Psoas muscle (tissue), 8 donors: ENCODE measurements at regions of chr2 and their contacts with region 1.

Region 1: GRCh38 chr2:159286709-159287441 is 372 bp upstream of the WDSUB1 start:
- DNase-seq: peak; percentile 99
- ATAC-seq: peak; percentile 97 to 99 (median 99)
- H3K4me3 ChIP-seq: peak overlapping the region; percentile 94
- H3K27ac ChIP-seq: peak overlapping the region; percentile 92
- H3K4me1 ChIP-seq: peaks cover 14% of the 10 kb centered on the region
- H3K27me3 ChIP-seq: no peaks in the 10 kb centered on the region
- CTCF ChIP-seq: no peak

Region 2: DNA sequence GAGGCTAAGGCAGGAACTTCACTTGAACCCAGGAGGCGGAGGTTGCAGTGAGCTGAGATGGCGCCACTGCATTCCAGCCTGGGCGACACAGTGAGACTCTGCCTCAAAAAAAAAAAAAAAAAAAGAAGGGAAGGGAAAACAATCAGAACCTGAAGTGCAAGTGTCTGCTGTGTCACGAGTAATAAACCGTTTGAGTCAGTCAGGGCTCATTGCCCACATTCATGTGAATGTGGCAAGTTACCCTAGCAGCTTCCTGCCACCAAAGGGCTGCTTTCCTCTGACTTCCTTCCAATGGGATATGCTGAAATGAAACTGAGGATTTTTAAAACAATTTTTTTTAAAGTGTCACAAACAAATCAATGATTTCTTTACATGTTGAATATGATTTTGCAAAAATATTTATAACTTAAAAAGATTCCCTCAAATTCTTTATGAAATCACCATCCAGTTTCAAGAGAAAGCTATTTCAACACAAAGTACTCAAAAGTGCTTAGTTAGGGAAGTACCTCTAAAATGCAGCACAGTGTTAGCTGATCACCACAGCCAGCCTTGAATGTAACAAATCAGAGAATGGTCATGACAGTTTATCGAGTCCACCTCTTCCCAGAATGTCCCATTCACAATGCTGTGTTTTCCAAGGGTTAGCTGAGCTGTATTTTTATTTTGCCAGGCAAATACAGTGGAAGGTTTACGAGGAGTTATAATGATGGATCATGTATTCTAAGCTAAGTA is 36.7 kb before region 1 on chr2:
- intact Hi-C with region 1: loop called in 1 of 2 experiments (anchors 5 kb)
- DNase-seq: peak in 1 of 2 donors; percentile 43
- ATAC-seq: peak; percentile 83 to 97 (median 89)
- H3K4me3 ChIP-seq: peak overlapping the region; percentile 43
- H3K27ac ChIP-seq: peak overlapping the region; percentile 64
- H3K4me1 ChIP-seq: peaks cover 10% of the 10 kb centered on the region
- H3K27me3 ChIP-seq: no peaks in the 10 kb centered on the region
- CTCF ChIP-seq: no peak

Region 3: GRCh38 chr2:159427048-159427447 is 140.2 kb after region 1 on chr2:
- intact Hi-C with region 1: no loop called
- DNase-seq: no peak
- ATAC-seq: no peak
- H3K4me3 ChIP-seq: no peak overlapping the region
- H3K27ac ChIP-seq: no peak overlapping the region
- H3K4me1 ChIP-seq: no peaks in the 10 kb centered on the region
- H3K27me3 ChIP-seq: no peaks in the 10 kb centered on the region
- CTCF ChIP-seq: no peak

Region 4: DNA sequence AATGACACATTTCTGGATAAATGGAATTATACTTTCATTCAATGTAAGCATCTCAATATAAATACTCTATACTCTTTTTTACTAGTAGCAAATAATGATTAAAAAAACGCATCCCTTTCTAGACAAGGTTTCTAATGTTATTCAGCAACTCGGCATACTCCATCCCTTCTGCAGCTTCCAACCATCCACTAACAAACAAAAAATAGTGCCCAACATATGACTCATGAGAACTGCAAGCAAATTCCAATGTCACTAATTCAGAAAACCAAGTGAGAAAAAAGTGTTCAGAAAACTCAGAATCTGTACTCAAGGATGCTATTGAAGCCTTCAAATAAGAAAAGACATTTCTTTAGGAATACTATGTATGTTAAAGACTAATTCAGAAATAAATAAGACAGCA is 189.5 kb after region 1 on chr2:
- intact Hi-C with region 1: no loop called
- DNase-seq: no peak
- ATAC-seq: no peak
- H3K4me3 ChIP-seq: no peak overlapping the region
- H3K27ac ChIP-seq: no peak overlapping the region
- H3K4me1 ChIP-seq: peaks cover 9% of the 10 kb centered on the region
- H3K27me3 ChIP-seq: no peaks in the 10 kb centered on the region
- CTCF ChIP-seq: no peak

Region 5: GRCh38 chr2:159615140-159615951 is 328.5 kb after region 1 on chr2:
- intact Hi-C with region 1: loop called in 1 of 2 experiments (anchors 1 kb)
- DNase-seq: peak; percentile 92 to 95
- ATAC-seq: peak; percentile 90 to 96 (median 93)
- H3K4me3 ChIP-seq: peak overlapping the region; percentile 83
- H3K27ac ChIP-seq: peak overlapping the region; percentile 92
- H3K4me1 ChIP-seq: peaks cover 31% of the 10 kb centered on the region
- H3K27me3 ChIP-seq: no peaks in the 10 kb centered on the region
- CTCF ChIP-seq: no peak

Region 6: GRCh38 chr2:159712143-159712928 is 425.5 kb after region 1 on chr2 and contains the start of gene MARCHF7:
- intact Hi-C with region 1: loop called in 1 of 2 experiments (anchors 5 kb)
- DNase-seq: peak; percentile 98 to 99
- ATAC-seq: peak; percentile 96 to 97 (median 96)
- H3K4me3 ChIP-seq: peak within 1 kb of the TSS; percentile 87
- H3K27ac ChIP-seq: peak within 1 kb of the TSS; percentile 98
- H3K4me1 ChIP-seq: peaks cover 39% of the 10 kb centered on the region
- H3K27me3 ChIP-seq: no peaks in the 10 kb centered on the region
- CTCF ChIP-seq: peak; percentile 57
- total RNA-seq, gene MARCHF7: 72.6 to 104 (median 89.0) TPM